CD4-positive, alpha-beta T cell (primary cell): ENCODE measurements at regions of chr6 and their contacts with region 1.

Region 1: DNA sequence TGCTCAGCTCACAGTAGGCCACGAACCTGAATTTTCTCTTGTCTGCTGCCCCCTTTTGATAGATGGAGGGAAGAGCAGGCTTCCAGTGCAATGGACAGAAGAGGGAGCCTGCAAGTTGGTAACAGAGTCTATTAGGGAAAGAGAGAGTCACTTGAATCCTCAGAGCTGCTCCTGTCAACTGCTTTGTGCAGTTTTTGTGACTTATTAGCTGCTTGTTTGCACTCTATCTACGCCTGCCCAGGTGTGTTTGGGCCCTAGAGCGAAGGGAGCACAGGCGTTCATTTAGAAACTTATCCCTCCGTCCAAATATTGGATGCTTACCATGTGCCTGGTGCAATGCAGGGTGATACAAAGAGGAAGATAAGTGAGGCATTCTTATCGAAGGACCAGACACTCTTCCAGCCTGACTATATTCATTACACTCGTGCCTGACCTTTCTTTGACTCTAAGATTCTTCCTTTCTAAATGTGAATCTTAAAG is 11.6 kb upstream of the SLC2A12 start:
- DNase-seq: peak; percentile 27 to 79 (median 40)
- ATAC-seq: peak; percentile 97
- H3K4me3 ChIP-seq: no peak overlapping the region
- H3K4me3 Mint-ChIP-seq: no peak overlapping the region
- H3K27ac ChIP-seq: no peak overlapping the region
- H3K27ac Mint-ChIP-seq: no peak overlapping the region
- H3K4me1 ChIP-seq: no peaks in the 10 kb centered on the region
- H3K4me1 Mint-ChIP-seq: peaks cover 5% of the 10 kb centered on the region
- H3K27me3 ChIP-seq: no peaks in the 10 kb centered on the region
- H3K27me3 Mint-ChIP-seq: peaks cover 4% of the 10 kb centered on the region
- CTCF ChIP-seq: peak; percentile 73

Region 2: GRCh38 chr6:133973109-133973971 is 90.7 kb before region 1 on chr6:
- CTCF ChIA-PET with region 1: interaction called, 12 read pairs
- POLR2A ChIA-PET with region 1: no interaction called
- intact Hi-C with region 1: loop called (anchors 1 kb)
- DNase-seq: peak in 3 of 14 experiments; percentile 54 to 74 (median 69)
- ATAC-seq: peak; percentile 84
- H3K4me3 ChIP-seq: no peak overlapping the region
- H3K4me3 Mint-ChIP-seq: no peak overlapping the region
- H3K27ac ChIP-seq: no peak overlapping the region
- H3K27ac Mint-ChIP-seq: peak overlapping the region; percentile 16
- H3K4me1 ChIP-seq: peaks cover 9% of the 10 kb centered on the region
- H3K4me1 Mint-ChIP-seq: peaks cover 58% of the 10 kb centered on the region
- H3K27me3 ChIP-seq: no peaks in the 10 kb centered on the region
- H3K27me3 Mint-ChIP-seq: no peaks in the 10 kb centered on the region
- CTCF ChIP-seq: peak; percentile 92

Region 3: DNA sequence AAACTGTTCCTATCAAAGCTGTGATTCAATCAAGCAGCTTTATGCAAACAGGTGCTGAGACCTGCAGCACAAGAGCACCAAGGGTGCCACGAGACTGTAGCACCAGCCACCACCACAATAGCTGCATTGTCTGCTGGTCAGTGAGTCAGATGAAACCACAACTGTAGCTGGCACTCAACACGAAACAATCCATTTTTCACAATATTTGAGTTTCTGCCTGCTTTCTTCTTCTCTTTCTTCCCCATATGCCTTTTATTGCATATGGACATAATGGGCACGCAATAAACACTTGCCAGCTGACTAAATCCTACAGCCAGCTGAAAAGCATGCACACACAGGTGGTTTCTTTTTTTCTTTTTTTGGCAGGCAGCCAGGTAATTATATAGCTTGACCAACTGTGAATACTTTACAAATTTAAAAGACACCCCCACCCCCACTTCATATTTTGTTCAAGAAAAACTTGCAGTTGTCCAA is 28.1 kb before region 1 on chr6:
- CTCF ChIA-PET with region 1: no interaction called
- POLR2A ChIA-PET with region 1: no interaction called
- intact Hi-C with region 1: no loop called
- DNase-seq: peak in 1 of 14 experiments; percentile 4
- ATAC-seq: no peak
- H3K4me3 ChIP-seq: no peak overlapping the region
- H3K4me3 Mint-ChIP-seq: no peak overlapping the region
- H3K27ac ChIP-seq: no peak overlapping the region
- H3K27ac Mint-ChIP-seq: no peak overlapping the region
- H3K4me1 ChIP-seq: no peaks in the 10 kb centered on the region
- H3K4me1 Mint-ChIP-seq: no peaks in the 10 kb centered on the region
- H3K27me3 ChIP-seq: no peaks in the 10 kb centered on the region
- H3K27me3 Mint-ChIP-seq: no peaks in the 10 kb centered on the region
- CTCF ChIP-seq: no peak

Region 4: GRCh38 chr6:134047673-134048072 is 16.3 kb before region 1 on chr6:
- CTCF ChIA-PET with region 1: interaction called, 11 read pairs
- POLR2A ChIA-PET with region 1: no interaction called
- intact Hi-C with region 1: loop called in 1 of 2 experiments (anchors 2 kb)
- DNase-seq: no peak
- ATAC-seq: no peak
- H3K4me3 ChIP-seq: no peak overlapping the region
- H3K4me3 Mint-ChIP-seq: no peak overlapping the region
- H3K27ac ChIP-seq: no peak overlapping the region
- H3K27ac Mint-ChIP-seq: no peak overlapping the region
- H3K4me1 ChIP-seq: peaks cover 8% of the 10 kb centered on the region
- H3K4me1 Mint-ChIP-seq: peaks cover 4% of the 10 kb centered on the region
- H3K27me3 ChIP-seq: peaks cover 0 to 8% of the 10 kb centered on the region in 2 experiments
- H3K27me3 Mint-ChIP-seq: no peaks in the 10 kb centered on the region
- CTCF ChIP-seq: no peak

Region 5: DNA sequence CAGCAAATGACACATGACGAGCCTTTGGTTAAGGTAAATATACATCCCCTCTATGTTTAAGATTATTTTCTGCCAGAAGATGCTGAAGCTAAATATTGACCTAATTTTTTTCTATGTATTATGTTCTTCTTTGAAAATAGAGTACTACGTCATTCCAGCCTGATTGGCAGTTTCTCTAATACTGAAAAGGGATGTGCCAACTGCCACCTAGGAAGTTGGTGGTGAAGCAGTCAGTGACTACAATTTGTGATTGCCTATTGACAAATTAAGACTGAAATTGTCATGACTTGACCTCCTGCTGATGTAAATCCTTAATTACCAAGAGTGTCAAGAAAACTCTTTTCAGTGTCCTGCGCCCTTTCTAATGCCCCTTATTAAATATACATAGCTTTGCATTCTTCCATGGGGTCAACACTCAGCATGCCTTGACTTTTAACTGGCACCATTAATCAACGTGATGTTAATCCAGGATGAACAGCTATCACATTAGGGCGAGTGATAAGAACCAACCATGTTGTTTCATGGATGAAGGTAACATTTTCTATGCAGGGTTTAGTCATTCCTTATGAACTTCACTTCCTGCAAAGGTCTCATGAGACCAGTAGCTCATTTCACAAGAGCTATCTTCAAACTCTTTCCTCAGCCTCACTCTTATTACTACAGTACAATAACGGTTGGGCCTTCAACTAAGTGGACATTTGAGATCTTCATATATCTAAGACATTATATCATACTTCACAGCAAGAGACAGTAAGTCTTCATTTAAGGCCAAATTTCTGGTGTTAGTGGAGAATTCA is 276.4 kb after region 1 on chr6:
- CTCF ChIA-PET with region 1: no interaction called
- POLR2A ChIA-PET with region 1: no interaction called
- intact Hi-C with region 1: no loop called
- DNase-seq: no peak
- ATAC-seq: no peak
- H3K4me3 ChIP-seq: no peak overlapping the region
- H3K4me3 Mint-ChIP-seq: no peak overlapping the region
- H3K27ac ChIP-seq: no peak overlapping the region
- H3K27ac Mint-ChIP-seq: no peak overlapping the region
- H3K4me1 ChIP-seq: no peaks in the 10 kb centered on the region
- H3K4me1 Mint-ChIP-seq: peaks cover 5% of the 10 kb centered on the region
- H3K27me3 ChIP-seq: no peaks in the 10 kb centered on the region
- H3K27me3 Mint-ChIP-seq: no peaks in the 10 kb centered on the region
- CTCF ChIP-seq: no peak

Region 6: GRCh38 chr6:134352786-134353480 is 288.9 kb after region 1 on chr6:
- CTCF ChIA-PET with region 1: no interaction called
- POLR2A ChIA-PET with region 1: no interaction called
- intact Hi-C with region 1: no loop called
- DNase-seq: no peak
- ATAC-seq: no peak
- H3K4me3 ChIP-seq: no peak overlapping the region
- H3K4me3 Mint-ChIP-seq: no peak overlapping the region
- H3K27ac ChIP-seq: no peak overlapping the region
- H3K27ac Mint-ChIP-seq: peak overlapping the region; percentile 84
- H3K4me1 ChIP-seq: peaks cover 12% of the 10 kb centered on the region
- H3K4me1 Mint-ChIP-seq: peaks cover 27% of the 10 kb centered on the region
- H3K27me3 ChIP-seq: no peaks in the 10 kb centered on the region
- H3K27me3 Mint-ChIP-seq: no peaks in the 10 kb centered on the region
- CTCF ChIP-seq: no peak